Mammary epithelial cell (primary cell): ENCODE measurements at regions of chr7 and their contacts with region 1.

Region 1: DNA sequence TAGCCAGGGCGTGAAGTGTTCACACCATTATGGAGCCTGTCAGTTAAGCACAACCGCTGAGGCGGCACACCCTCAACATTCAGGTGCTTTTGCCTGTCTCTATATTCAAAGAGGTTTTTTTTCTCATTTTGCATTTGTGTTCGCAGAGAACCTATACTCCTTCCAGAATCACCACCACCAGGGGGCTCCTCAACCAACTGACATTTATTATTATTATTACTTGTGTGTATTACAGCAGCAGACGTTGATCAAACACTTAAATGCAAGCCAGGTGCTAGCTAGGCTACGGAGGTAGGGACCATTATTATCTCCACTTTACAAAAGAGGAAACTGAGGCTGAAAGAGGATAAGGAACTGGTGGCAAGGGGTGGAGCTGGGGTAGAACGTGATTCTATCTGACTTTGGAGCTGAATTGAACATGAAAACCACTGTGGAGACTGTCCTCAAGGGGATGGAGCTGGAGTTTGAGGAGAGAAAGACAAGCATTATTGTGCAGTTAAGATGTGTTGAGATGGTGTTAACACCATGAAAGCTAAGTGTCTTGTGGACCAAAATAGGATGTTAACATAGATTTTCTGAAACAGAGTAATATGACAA is 133.8 kb upstream of the PLXNA4 start:
- DNase-seq: peak; percentile 22
- H3K4me3 ChIP-seq: no peak overlapping the region
- H3K27ac ChIP-seq: no peak overlapping the region
- H3K4me1 ChIP-seq: no peaks in the 10 kb centered on the region
- H3K27me3 ChIP-seq: peaks cover 1% of the 10 kb centered on the region
- CTCF ChIP-seq: peak; percentile 49 to 65

Region 2: DNA sequence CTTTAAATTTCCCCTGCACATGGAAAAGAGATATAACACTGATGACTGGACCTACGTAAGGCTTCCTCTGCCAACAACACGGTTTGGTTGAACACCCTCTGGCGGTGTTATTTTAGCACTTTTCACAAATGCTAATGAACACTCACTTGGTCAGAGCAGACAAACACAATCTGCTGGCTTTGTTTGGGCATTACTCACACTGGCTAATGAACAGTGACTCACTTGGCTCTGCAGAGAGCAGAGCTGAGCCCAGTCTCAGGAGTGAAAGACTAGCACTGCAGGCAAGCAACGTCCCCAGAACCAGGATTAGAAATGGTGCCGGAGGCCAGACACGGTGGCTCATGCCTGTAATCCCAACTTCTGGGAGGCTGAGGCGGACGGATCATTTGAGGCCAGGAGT is 564.6 kb before region 1 on chr7:
- CTCF ChIA-PET with region 1: no interaction called
- dilution Hi-C with region 1: no loop called
- in situ Hi-C with region 1: no loop called
- intact Hi-C with region 1: no loop called
- DNase-seq: peak; percentile 92
- H3K4me3 ChIP-seq: no peak overlapping the region
- H3K27ac ChIP-seq: no peak overlapping the region
- H3K4me1 ChIP-seq: peaks cover 12% of the 10 kb centered on the region
- H3K27me3 ChIP-seq: no peaks in the 10 kb centered on the region
- CTCF ChIP-seq: peak; percentile 27 to 53

Region 3: DNA sequence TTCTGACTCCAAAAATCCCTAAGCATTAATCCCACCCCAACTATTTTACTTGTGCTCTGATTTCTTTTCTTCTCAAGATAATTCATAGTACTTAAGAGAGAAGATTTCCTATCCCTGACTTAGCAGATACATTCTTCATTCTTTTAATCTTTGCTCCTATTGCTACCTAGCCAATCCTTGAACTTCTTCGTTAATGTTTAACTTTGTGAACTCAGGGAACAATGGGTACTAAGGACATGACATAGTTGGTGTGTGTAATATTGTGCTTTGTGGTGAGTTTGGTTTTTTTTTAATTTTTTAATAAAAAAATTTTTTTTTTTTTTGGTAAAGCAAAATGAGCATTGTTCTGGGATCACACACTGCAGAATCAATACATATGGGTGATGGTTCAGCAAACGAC is 205.6 kb after region 1 on chr7:
- CTCF ChIA-PET with region 1: interaction called, 14 read pairs
- dilution Hi-C with region 1: no loop called
- in situ Hi-C with region 1: no loop called
- intact Hi-C with region 1: no loop called
- DNase-seq: no peak
- H3K4me3 ChIP-seq: no peak overlapping the region
- H3K27ac ChIP-seq: no peak overlapping the region
- H3K4me1 ChIP-seq: no peaks in the 10 kb centered on the region
- H3K27me3 ChIP-seq: no peaks in the 10 kb centered on the region
- CTCF ChIP-seq: no peak

Region 4: GRCh38 chr7:133230591-133231194 is 520.6 kb after region 1 on chr7:
- CTCF ChIA-PET with region 1: interaction called, 3 read pairs
- dilution Hi-C with region 1: no loop called
- in situ Hi-C with region 1: loop called in 1 of 2 experiments (anchors 25 kb)
- intact Hi-C with region 1: loop called (anchors 2 kb)
- DNase-seq: peak; percentile 32
- H3K4me3 ChIP-seq: no peak overlapping the region
- H3K27ac ChIP-seq: no peak overlapping the region
- H3K4me1 ChIP-seq: no peaks in the 10 kb centered on the region
- H3K27me3 ChIP-seq: no peaks in the 10 kb centered on the region
- CTCF ChIP-seq: peak; percentile 74 to 85

Region 5: GRCh38 chr7:133344275-133344674 is 634.2 kb after region 1 on chr7:
- CTCF ChIA-PET with region 1: no interaction called
- dilution Hi-C with region 1: no loop called
- in situ Hi-C with region 1: no loop called
- intact Hi-C with region 1: loop called (anchors 5 kb)
- DNase-seq: no peak
- H3K4me3 ChIP-seq: no peak overlapping the region
- H3K27ac ChIP-seq: no peak overlapping the region
- H3K4me1 ChIP-seq: no peaks in the 10 kb centered on the region
- H3K27me3 ChIP-seq: no peaks in the 10 kb centered on the region
- CTCF ChIP-seq: peak; percentile 26 to 44

Region 6: GRCh38 chr7:134016223-134016941 is 1306.3 kb after region 1 on chr7:
- CTCF ChIA-PET with region 1: no interaction called
- dilution Hi-C with region 1: no loop called
- in situ Hi-C with region 1: no loop called
- intact Hi-C with region 1: loop called (anchors 2 kb)
- DNase-seq: peak; percentile 11
- H3K4me3 ChIP-seq: no peak overlapping the region
- H3K27ac ChIP-seq: no peak overlapping the region
- H3K4me1 ChIP-seq: no peaks in the 10 kb centered on the region
- H3K27me3 ChIP-seq: no peaks in the 10 kb centered on the region
- CTCF ChIP-seq: peak; percentile 67 to 78